Activated naive CD4-positive, alpha-beta T cell treated with anti-CD3 and anti-CD28 coated beads for 36 hours (primary cell): ENCODE measurements at regions of chr5 and their contacts with region 1.

Region 1: DNA sequence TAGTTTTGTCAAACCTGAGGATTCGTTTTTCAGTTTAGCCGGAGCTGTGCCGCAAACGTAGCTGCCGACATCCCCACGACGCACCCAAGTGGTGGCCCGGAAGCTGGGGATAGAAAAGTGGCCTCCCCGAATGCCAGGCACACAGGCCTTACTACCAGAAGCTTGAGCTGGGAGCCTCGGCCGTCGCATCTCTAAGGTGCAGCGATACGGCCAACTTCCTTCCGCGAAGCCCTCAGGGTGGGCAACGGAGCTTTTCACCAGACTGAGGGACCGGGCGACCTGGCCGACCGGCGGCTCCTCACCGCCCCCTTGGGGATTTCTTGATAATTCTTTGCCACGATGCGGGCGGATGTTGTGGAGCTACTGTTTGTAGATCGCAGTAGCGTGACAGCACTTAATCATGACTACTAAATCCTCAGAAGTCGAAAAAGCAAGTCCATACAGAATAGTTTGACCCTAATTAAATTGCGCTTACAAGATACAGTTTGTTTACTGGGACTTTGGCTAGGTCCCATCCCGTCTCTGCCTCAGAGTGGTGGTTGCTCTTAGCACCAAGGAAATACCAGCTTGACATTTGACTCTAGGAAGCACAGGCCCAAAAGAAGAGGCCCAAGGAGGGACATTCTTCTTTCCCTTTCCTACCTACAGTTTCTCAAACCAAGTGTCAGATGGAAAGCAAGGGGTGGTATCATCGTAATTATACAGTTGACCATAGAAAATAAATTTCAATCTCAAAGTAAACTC is 613 bp upstream of the TMEM267 start:
- DNase-seq: peak; percentile 92
- H3K4me3 Mint-ChIP-seq: peak overlapping the region; percentile 97
- H3K27ac Mint-ChIP-seq: peak overlapping the region; percentile 99
- H3K4me1 Mint-ChIP-seq: peaks cover 45% of the 10 kb centered on the region
- H3K27me3 Mint-ChIP-seq: no peaks in the 10 kb centered on the region

Region 2: DNA sequence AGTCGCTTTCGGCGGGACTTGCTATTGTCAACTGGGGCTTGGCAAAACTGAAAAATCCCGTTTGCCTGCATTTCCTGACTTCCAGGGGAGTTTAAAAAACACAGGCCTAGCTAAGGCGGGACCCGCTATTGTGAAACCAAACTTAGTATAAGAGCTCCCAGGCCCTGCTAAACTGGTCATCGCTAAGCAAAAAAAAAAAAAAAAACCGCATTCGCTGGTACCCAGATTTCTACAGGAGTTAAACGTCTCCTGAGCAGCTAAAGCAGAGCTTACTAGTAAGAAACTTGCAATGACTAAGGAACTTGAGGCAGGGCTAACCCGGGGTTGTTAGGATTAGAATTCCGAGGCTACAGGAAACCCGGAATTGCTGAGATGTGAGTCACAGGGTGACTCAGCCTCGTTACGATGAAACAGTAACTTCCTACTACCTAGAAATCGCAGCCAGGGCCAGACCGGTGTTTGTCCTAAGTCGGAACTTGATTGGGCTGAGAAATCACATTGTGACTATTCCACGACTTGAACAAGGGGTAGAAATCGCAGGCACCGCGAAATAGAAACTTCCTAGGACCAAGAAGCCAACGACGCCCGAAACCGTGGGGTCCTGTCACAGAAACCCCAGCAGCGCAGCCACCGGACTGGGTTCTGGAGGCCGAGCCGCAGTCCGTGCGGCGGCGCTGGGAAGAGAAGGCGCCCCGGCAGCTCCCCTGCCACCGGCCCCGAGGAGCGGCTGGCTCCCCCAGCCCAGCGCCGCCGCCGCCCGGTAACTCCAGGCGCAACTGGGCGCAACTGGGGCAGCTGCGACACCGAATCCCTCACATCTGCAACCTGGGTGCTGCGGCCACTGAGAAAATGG is 533.6 kb before region 1 on chr5:
- CTCF ChIA-PET with region 1: no interaction called
- intact Hi-C with region 1: loop called (anchors 2 kb)
- DNase-seq: peak; percentile 83
- H3K4me3 Mint-ChIP-seq: peak overlapping the region; percentile 87
- H3K27ac Mint-ChIP-seq: peak overlapping the region; percentile 88
- H3K4me1 Mint-ChIP-seq: peaks cover 9% of the 10 kb centered on the region
- H3K27me3 Mint-ChIP-seq: no peaks in the 10 kb centered on the region

Region 3: GRCh38 chr5:43066799-43067741 is 417.2 kb before region 1 on chr5:
- CTCF ChIA-PET with region 1: no interaction called
- intact Hi-C with region 1: loop called (anchors 1 kb)
- DNase-seq: peak; percentile 92
- H3K4me3 Mint-ChIP-seq: peak overlapping the region; percentile 98
- H3K27ac Mint-ChIP-seq: peak overlapping the region; percentile 98
- H3K4me1 Mint-ChIP-seq: peaks cover 36% of the 10 kb centered on the region
- H3K27me3 Mint-ChIP-seq: no peaks in the 10 kb centered on the region

Region 4: GRCh38 chr5:43120720-43121564 is 363.3 kb before region 1 on chr5 and contains the start of gene ZNF131:
- CTCF ChIA-PET with region 1: interaction called, 3 read pairs
- intact Hi-C with region 1: loop called (anchors 1 kb)
- DNase-seq: peak; percentile 96
- H3K4me3 Mint-ChIP-seq: peak within 1 kb of the TSS; percentile 99
- H3K27ac Mint-ChIP-seq: peak within 1 kb of the TSS; percentile 96
- H3K4me1 Mint-ChIP-seq: peaks cover 38% of the 10 kb centered on the region
- H3K27me3 Mint-ChIP-seq: no peaks in the 10 kb centered on the region
- total RNA-seq, gene ZNF131: 25.0 to 29.6 TPM

Region 5: GRCh38 chr5:43219126-43219525 is 265.2 kb before region 1 on chr5:
- CTCF ChIA-PET with region 1: no interaction called
- intact Hi-C with region 1: no loop called
- DNase-seq: no peak
- H3K4me3 Mint-ChIP-seq: no peak overlapping the region
- H3K27ac Mint-ChIP-seq: no peak overlapping the region
- H3K4me1 Mint-ChIP-seq: no peaks in the 10 kb centered on the region
- H3K27me3 Mint-ChIP-seq: no peaks in the 10 kb centered on the region

Region 6: GRCh38 chr5:43396762-43397304 is 87.4 kb before region 1 on chr5:
- CTCF ChIA-PET with region 1: interaction called, 24 read pairs
- intact Hi-C with region 1: loop called (anchors 1 kb)
- DNase-seq: peak; percentile 75
- H3K4me3 Mint-ChIP-seq: peak overlapping the region; percentile 88
- H3K27ac Mint-ChIP-seq: peak overlapping the region; percentile 87
- H3K4me1 Mint-ChIP-seq: peaks cover 32% of the 10 kb centered on the region
- H3K27me3 Mint-ChIP-seq: no peaks in the 10 kb centered on the region

Region 7: DNA sequence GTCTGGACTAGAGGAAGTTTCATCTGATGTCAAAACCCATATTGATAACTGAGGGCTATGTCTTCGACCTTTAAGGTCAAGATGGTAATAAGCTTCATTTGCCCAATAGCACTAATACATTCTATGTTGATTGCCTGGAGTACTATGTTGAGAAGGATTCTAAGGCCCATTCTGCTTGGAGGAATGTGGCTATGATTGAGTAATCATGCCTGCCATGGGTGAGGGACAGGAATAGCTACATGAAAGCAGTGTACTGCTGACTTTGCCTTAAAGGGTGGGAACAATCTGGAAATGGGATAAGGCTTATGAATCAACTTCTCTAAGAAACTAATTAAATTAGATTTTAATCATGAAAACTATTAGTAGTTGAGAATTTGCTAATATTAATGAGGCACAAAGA is 132.3 kb after region 1 on chr5:
- CTCF ChIA-PET with region 1: no interaction called
- intact Hi-C with region 1: no loop called
- DNase-seq: no peak
- H3K4me3 Mint-ChIP-seq: no peak overlapping the region
- H3K27ac Mint-ChIP-seq: no peak overlapping the region
- H3K4me1 Mint-ChIP-seq: peaks cover 1% of the 10 kb centered on the region
- H3K27me3 Mint-ChIP-seq: no peaks in the 10 kb centered on the region

Region 8: DNA sequence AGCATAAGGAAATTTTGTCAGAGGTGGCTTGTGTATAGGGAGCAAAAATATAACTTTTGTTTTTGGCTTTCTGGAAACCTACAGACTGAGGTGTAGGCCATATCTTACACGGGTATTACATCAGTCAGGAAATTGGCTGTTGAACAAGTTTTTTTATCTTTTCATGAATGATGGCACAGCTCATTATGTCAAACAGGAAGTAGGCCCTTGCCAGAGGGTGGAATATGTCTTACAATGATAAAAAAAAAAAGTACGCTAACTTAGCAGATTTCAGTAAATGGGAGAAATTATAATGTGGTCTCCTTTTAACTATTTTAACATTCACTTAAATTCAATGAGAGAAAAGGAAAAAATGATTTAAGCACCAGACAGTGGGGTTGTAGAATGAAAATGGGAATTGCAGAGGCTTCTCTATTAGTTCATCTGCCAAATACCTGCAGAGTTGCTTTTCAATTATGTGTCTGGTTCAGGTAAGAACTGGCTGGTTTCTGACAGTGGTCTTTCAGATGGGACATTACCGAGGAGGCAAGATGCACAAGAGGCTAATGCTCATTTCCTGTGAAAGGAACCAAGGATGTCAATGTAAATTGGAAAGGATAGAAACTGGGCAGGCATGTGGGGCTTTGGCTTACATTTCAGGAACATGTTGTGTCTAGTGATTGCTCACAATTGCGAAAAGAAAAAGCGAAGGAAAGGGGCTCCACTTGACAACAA is 288.6 kb after region 1 on chr5:
- CTCF ChIA-PET with region 1: no interaction called
- intact Hi-C with region 1: loop called (anchors 2 kb)
- DNase-seq: no peak
- H3K4me3 Mint-ChIP-seq: no peak overlapping the region
- H3K27ac Mint-ChIP-seq: peak overlapping the region; percentile 82
- H3K4me1 Mint-ChIP-seq: peaks cover 21% of the 10 kb centered on the region
- H3K27me3 Mint-ChIP-seq: no peaks in the 10 kb centered on the region